Activated CD4-positive, alpha-beta T cell treated with anti-CD3 and anti-CD28 coated beads, Interleukin-2, amount 10 ng/mL, durations not matched to agents 24 days and 14 days (primary cell): ENCODE measurements at regions of chr5 and their contacts with region 1.

Region 1: DNA sequence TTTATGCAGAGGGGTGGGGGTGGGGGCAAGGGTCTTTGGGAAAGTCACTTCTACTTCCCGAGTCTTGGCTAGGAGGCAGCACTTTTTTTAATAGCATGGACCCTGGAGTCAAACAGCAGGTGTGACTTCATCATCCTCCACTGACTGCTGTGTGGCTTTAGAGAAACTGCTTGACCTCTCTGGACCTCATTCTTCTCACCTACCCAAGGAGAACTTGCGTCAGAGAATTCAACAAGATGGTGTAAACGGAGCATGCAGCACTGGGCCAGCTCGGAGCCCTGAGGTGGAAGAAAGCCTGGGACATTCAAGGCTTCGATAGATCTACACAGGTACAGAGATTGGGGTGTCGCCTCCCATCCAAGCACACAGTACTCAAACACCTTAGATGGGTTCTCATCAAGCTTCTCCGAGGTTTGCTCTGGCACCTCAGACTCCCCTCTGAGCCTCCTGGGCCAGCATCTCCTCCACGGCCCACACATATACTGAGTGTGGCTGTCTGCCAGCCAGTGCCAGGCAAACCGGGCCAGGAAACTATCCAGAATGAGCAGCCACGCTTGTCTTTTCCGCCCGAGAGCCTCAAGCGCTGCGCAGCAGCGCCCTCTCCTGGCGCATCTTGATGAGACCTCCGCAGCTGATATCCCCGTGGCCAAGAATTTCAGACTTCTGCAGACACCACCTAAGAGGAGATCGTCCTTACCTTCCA is 4.6 kb upstream of the SLC25A48 start:
- DNase-seq: peak; percentile 81
- H3K4me3 Mint-ChIP-seq: no peak overlapping the region
- H3K27ac Mint-ChIP-seq: no peak overlapping the region
- H3K4me1 Mint-ChIP-seq: peaks cover 6% of the 10 kb centered on the region
- H3K27me3 Mint-ChIP-seq: peaks cover 12% of the 10 kb centered on the region

Region 2: DNA sequence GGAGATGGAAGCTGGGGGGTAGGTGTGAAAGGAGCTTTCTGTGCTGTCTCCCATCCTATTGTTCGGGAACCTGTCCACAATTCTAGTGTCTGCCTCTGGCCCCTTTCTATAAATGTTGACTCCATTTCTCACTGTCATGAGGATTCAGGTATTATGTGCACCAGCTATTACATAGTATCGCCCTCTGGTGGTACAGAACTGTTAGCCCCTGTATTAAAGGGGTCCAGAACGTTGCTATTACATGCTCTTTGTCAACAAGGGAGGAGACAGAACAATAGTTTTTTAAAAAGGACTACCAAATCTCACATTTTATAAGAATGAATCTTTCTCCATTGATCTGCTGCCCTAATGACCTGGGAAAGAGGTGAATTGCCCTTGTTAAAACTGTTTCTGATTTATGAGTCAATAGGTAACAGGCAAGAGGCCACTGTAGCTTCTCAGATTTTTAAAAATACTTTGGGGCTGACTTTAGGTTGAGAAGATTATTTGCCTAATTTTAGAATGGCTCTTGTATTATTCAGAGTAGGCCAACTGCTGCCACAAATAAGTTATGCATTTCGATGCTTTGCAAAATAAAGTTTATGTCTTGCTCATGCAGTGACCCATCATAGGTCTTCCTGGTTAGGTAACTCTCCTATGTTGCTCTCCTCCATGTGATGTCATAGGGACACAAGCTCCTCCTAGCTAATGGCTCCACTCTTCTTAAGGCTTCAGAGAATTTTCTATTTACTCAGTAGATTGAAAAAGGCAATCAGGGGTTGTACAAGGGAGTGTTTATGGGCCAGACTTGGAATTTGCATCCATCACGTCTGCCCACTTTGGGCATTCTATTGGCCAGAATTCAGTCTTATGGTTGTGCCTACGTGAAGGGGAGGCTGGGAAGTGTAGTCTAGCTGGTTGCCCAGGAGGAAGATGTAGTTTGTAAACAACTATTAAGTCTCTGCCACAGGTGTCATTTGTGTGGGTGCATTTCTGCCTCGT is 403.4 kb before region 1 on chr5:
- intact Hi-C with region 1: no loop called
- DNase-seq: peak; percentile 83
- H3K4me3 Mint-ChIP-seq: peak overlapping the region; percentile 43
- H3K27ac Mint-ChIP-seq: peak overlapping the region; percentile 76
- H3K4me1 Mint-ChIP-seq: peaks cover 20% of the 10 kb centered on the region
- H3K27me3 Mint-ChIP-seq: peaks cover 9% of the 10 kb centered on the region

Region 3: GRCh38 chr5:135457424-135458071 is 372.3 kb before region 1 on chr5:
- intact Hi-C with region 1: loop called (anchors 1 kb)
- DNase-seq: peak; percentile 88
- H3K4me3 Mint-ChIP-seq: no peak overlapping the region
- H3K27ac Mint-ChIP-seq: no peak overlapping the region
- H3K4me1 Mint-ChIP-seq: peaks cover 2% of the 10 kb centered on the region
- H3K27me3 Mint-ChIP-seq: peaks cover 21% of the 10 kb centered on the region

Region 4: GRCh38 chr5:135560858-135561257 is 269.0 kb before region 1 on chr5:
- intact Hi-C with region 1: loop called (anchors 2 kb)
- DNase-seq: peak; percentile 91
- H3K4me3 Mint-ChIP-seq: no peak overlapping the region
- H3K27ac Mint-ChIP-seq: no peak overlapping the region
- H3K4me1 Mint-ChIP-seq: peaks cover 5% of the 10 kb centered on the region
- H3K27me3 Mint-ChIP-seq: peaks cover 32% of the 10 kb centered on the region

Region 5: DNA sequence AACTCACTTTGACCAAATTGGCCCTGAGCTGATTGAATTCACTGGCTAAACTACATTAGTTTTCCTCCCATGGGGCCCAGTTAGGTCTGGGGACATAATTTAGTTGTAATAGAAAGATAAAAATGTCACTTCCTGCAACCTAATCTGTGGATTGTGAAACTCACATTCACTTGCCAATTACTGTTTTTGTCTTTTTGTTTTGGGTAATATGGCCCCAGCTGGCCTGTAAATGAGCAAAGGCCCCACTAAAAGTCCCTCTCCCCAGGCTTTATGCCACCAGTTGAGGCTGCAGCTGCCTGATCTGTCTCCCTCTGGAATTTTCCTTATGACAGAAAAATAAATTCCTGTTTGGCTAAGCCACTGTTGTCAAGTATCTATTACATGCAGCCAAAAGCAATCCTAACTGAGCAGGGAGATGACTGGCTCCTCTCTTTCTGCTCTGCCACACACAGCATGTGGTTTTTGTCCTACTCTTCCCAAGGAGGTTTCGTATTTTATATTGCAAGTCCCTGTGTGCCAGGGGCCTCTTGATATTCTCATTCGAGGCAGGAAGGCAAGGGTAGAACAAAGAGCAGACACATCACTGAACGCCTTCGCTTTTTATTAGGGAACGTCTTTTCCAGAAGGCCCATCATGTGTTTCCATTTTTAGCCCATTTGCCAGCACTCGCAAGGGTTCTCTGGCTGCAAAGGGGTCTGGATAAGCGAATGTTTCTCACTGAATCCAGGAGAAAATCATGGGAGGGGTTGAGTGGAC is 19.5 kb before region 1 on chr5:
- intact Hi-C with region 1: no loop called
- DNase-seq: peak; percentile 27
- H3K4me3 Mint-ChIP-seq: no peak overlapping the region
- H3K27ac Mint-ChIP-seq: no peak overlapping the region
- H3K4me1 Mint-ChIP-seq: no peaks in the 10 kb centered on the region
- H3K27me3 Mint-ChIP-seq: no peaks in the 10 kb centered on the region

Region 6: DNA sequence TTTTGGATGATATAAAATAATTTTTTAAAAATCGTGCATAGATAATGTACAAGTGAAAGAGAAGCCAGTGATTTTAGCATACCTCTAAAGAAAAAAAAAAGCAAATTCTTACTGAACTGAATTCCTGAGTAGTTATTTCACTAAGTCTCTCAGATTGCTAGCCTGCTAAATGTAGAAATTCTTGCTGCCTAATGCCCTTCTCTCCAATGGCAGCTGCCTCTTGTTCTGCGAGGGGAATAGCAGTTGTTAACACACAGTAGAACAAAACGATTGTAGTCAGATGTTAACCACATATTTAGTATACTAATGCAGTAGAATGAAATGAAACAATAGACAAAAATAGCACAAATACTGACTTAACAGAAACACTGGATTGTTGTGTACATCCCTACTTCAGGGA is 329.6 kb after region 1 on chr5:
- intact Hi-C with region 1: no loop called
- DNase-seq: no peak
- H3K4me3 Mint-ChIP-seq: no peak overlapping the region
- H3K27ac Mint-ChIP-seq: no peak overlapping the region
- H3K4me1 Mint-ChIP-seq: no peaks in the 10 kb centered on the region
- H3K27me3 Mint-ChIP-seq: no peaks in the 10 kb centered on the region